ENCODE measurements at regions of chr12 and their contacts with region 1.

Region 1: GRCh38 chr12:53321074-53321814 is at the start of gene AAAS:
- H3K4me3 Mint-ChIP-seq: peak within 1 kb of the TSS; percentile 91
- H3K27ac Mint-ChIP-seq: peak within 1 kb of the TSS; percentile 90
- H3K4me1 Mint-ChIP-seq: peaks cover 43% of the 10 kb centered on the region
- H3K27me3 Mint-ChIP-seq: peaks cover 5% of the 10 kb centered on the region

Region 2: DNA sequence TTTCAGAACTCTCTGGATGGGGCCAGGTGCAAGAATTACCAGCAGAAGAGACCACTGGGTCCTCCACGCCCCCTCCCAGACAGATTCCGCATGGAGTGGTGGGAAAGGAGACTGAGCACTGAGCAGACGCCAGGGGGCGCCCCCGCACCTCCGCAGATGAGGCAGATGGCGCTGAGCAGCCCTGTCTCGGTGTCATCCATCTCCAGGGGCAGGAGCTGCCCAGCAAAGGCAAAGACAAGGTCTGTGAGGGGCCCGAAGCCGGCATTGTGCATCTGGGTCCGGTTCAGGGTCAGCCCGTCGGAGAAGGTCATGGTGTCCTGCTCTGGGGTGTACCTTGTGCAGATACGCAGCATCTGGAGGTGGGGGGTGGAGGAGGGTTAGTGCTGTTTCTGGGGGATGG is 107.9 kb before region 1 on chr12:
- intact Hi-C with region 1: loop called (anchors 1 kb)
- H3K4me3 Mint-ChIP-seq: no peak overlapping the region
- H3K27ac Mint-ChIP-seq: no peak overlapping the region
- H3K4me1 Mint-ChIP-seq: peaks cover 76% of the 10 kb centered on the region
- H3K27me3 Mint-ChIP-seq: no peaks in the 10 kb centered on the region

Region 3: GRCh38 chr12:53224061-53224896 is 97.0 kb before region 1 on chr12:
- intact Hi-C with region 1: no loop called
- H3K4me3 Mint-ChIP-seq: peak overlapping the region; percentile 7
- H3K27ac Mint-ChIP-seq: peak overlapping the region; percentile 36
- H3K4me1 Mint-ChIP-seq: peaks cover 84% of the 10 kb centered on the region
- H3K27me3 Mint-ChIP-seq: peaks cover 24% of the 10 kb centered on the region

Region 4: GRCh38 chr12:53295070-53295890 is 26.0 kb before region 1 on chr12 and contains the start of gene PFDN5:
- intact Hi-C with region 1: loop called (anchors 1 kb)
- H3K4me3 Mint-ChIP-seq: peak within 1 kb of the TSS; percentile 94
- H3K27ac Mint-ChIP-seq: peak within 1 kb of the TSS; percentile 92
- H3K4me1 Mint-ChIP-seq: peaks cover 50% of the 10 kb centered on the region
- H3K27me3 Mint-ChIP-seq: no peaks in the 10 kb centered on the region

Region 5: DNA sequence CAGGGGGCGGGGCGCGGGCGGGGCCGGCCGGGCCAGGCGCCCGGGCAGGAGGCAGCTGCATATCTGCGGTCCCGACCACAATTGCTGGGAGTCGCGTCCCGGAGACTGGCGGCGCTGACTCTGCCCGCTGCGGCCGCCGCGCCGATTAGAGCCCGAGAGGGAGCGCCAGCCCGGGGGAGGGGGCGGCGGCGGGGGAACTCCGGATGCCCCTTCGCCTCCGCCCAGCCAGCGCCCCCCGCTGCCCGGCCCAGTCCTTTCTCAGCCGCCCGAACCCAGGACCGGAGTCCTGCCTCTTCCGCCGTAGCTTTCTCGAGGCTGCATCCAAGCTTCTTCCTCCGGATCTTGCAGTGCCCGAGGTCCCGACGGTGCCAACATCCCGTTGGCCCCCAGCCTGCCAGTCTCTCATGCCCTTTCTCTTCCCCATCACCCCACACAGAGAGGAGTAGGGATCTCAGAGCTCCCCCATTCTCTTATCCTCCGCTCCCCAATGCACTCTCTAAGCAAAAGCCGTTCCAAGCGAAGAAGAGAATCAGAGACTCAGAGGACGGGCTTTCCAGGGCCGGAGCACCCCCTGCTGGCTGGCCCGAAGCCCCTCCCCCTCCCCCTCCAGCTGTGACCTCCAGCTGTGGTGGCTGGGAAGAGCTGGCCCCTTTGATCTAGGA is 23.7 kb after region 1 on chr12:
- intact Hi-C with region 1: loop called (anchors 1 kb)
- H3K4me3 Mint-ChIP-seq: peak overlapping the region; percentile 86
- H3K27ac Mint-ChIP-seq: peak overlapping the region; percentile 68
- H3K4me1 Mint-ChIP-seq: peaks cover 38% of the 10 kb centered on the region
- H3K27me3 Mint-ChIP-seq: peaks cover 37% of the 10 kb centered on the region

Region 6: GRCh38 chr12:53379389-53380103 is 58.3 kb after region 1 on chr12:
- intact Hi-C with region 1: loop called (anchors 1 kb)
- H3K4me3 Mint-ChIP-seq: no peak overlapping the region
- H3K27ac Mint-ChIP-seq: no peak overlapping the region
- H3K4me1 Mint-ChIP-seq: peaks cover 48% of the 10 kb centered on the region
- H3K27me3 Mint-ChIP-seq: no peaks in the 10 kb centered on the region

Region 7: GRCh38 chr12:53424626-53425514 is 103.6 kb after region 1 on chr12:
- intact Hi-C with region 1: loop called (anchors 1 kb)
- H3K4me3 Mint-ChIP-seq: no peak overlapping the region
- H3K27ac Mint-ChIP-seq: no peak overlapping the region
- H3K4me1 Mint-ChIP-seq: peaks cover 14% of the 10 kb centered on the region
- H3K27me3 Mint-ChIP-seq: peaks cover 21% of the 10 kb centered on the region

Region 8: GRCh38 chr12:53500776-53501614 is 179.8 kb after region 1 on chr12 and contains the start of gene TARBP2:
- intact Hi-C with region 1: loop called (anchors 2 kb)
- H3K4me3 Mint-ChIP-seq: peak within 1 kb of the TSS; percentile 88
- H3K27ac Mint-ChIP-seq: peak within 1 kb of the TSS; percentile 94
- H3K4me1 Mint-ChIP-seq: peaks cover 80% of the 10 kb centered on the region
- H3K27me3 Mint-ChIP-seq: no peaks in the 10 kb centered on the region

Measured in dendritic cell treated with granulocyte-macrophage colony-stimulating factor and Interleukin-4, amounts not matched to agents 40 ng/mL and 50 ng/mL, for 4 days (primary cell).